ENCODE measurements at regions of chr1 and their contacts with region 1.

Region 1: DNA sequence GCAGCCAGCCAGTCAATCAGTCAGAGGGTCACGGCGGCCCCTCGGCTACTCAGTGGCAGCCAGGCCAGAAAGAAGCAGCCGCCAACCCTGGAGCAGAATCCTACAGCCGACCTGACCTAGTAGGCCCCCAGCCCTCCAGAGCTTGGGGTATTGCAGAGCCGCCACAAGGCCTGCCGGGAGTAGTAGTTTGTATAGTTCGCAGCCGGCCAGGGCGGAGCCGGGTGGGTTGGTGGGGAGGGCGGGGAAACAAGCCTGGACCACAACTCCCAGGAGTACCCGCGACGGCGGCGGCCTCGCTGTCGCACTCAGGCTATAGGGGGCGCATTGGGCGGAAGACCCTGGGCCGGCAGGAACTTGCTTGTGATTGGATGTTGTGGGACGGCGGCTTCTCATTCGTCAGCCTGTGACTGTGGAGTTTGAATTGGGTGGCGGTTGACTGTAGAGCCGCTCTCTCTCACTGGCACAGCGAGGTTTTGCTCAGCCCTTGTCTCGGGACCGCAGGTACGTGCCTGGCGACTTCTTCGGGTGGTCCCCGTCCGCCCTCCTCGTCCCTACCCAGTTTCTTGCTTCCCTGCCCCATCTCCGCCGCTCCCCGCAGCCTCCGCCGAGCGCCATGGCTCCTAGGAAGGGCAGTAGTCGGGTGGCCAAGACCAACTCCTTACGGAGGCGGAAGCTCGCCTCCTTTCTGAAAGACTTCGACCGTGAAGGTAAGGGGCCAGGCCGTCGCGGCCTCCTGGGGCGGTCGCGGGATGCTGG is at the start of gene CDCA8:
- DNase-seq: peak; percentile 98
- ATAC-seq: peak; percentile 94 to 98 (median 95)
- H3K4me3 ChIP-seq: peak within 1 kb of the TSS; percentile 67 to 98 (median 87)
- H3K27ac ChIP-seq: peak within 1 kb of the TSS; percentile 60 to 90 (median 78)
- H3K4me1 ChIP-seq: peaks cover 10 to 36% (median 29%) of the 10 kb centered on the region in 9 donors
- H3K27me3 ChIP-seq: no peaks in the 10 kb centered on the region
- CTCF ChIP-seq: peak; percentile 25 to 90 (median 70)
- total RNA-seq, gene CDCA8: 0.09 to 2.9 (median 0.42) TPM in 9 of 10 donors, not detected in the other

Region 2: GRCh38 chr1:36464605-36465393 is 1227.5 kb before region 1 on chr1:
- intact Hi-C with region 1: loop called in 1 of 10 experiments (anchors 5 kb)
- DNase-seq: peak in 1 of 2 donors; percentile 18
- ATAC-seq: peak; percentile 41 to 68 (median 60)
- H3K4me3 ChIP-seq: peak overlapping the region; percentile 81 to 99 (median 96)
- H3K27ac ChIP-seq: peak overlapping the region; percentile 9 to 95 (median 89)
- H3K4me1 ChIP-seq: peaks cover 8 to 25% (median 17%) of the 10 kb centered on the region in 9 donors
- H3K27me3 ChIP-seq: no peaks in the 10 kb centered on the region
- CTCF ChIP-seq: no peak

Region 3: GRCh38 chr1:37479255-37480124 is 212.8 kb before region 1 on chr1:
- intact Hi-C with region 1: loop called in 2 of 10 experiments (anchors 5 kb)
- DNase-seq: peak; percentile 64 to 68
- ATAC-seq: peak; percentile 12 to 75 (median 48)
- H3K4me3 ChIP-seq: peak overlapping the region in 9 of 10 donors; percentile 18 to 92 (median 36)
- H3K27ac ChIP-seq: peak overlapping the region; percentile 11 to 98 (median 82)
- H3K4me1 ChIP-seq: peaks cover 20 to 65% (median 56%) of the 10 kb centered on the region in 9 donors
- H3K27me3 ChIP-seq: no peaks in the 10 kb centered on the region
- CTCF ChIP-seq: no peak

Region 4: DNA sequence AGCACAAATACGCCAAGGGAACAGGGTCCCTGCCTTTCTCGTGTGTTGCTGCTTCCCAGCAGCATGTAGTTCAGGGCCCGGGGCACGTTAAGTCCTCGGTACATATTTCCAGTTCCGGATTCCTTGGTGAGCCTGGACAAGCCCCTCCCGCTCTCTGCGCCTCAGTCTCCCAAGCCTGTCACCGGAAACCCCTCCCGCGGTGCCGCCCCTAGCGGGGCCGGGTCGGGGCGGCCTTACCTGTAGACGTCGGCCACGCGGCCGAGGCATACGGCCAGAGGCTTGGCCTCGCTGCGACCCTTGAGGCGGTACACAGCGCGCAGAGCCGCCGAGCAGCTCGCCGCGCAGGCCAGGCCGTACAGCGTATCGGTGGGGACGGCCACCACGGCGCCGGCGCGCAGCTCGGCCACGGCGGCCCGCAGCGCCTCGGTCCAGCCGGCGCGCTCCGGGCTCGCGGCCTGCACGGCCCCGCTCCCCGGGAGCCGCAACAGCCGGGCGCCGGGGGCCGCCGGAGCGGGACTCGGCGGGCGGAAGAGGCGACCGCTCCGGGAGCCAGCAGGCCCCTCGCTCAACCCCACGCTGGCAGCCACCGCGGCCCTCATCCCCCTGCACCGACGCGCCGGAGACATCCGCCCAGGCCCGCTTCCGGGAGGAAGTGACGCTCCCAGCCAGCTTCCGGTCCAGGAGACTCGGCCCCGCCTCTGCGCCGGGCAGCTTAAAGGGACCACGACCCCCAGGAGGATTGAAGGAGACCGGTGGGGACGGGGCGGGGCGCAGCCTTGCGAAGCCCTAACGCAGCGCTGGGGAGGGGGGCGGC is 115.5 kb after region 1 on chr1 and contains the starts of genes C1orf122 and YRDC:
- intact Hi-C with region 1: loop called in 5 of 10 experiments (anchors 5 to 10 kb)
- DNase-seq: peak; percentile 95 to 96
- ATAC-seq: peak; percentile 95 to 98 (median 96)
- H3K4me3 ChIP-seq: peak within 1 kb of the TSS; percentile 79 to 98 (median 87)
- H3K27ac ChIP-seq: peak within 1 kb of the TSS; percentile 76 to 99 (median 96)
- H3K4me1 ChIP-seq: peaks cover 7 to 45% (median 21%) of the 10 kb centered on the region in 9 donors
- H3K27me3 ChIP-seq: no peaks in the 10 kb centered on the region
- CTCF ChIP-seq: no peak
- total RNA-seq, gene C1orf122: 37.8 to 53.0 (median 46.0) TPM
- total RNA-seq, gene YRDC: 3.3 to 9.1 (median 5.5) TPM

Region 5: DNA sequence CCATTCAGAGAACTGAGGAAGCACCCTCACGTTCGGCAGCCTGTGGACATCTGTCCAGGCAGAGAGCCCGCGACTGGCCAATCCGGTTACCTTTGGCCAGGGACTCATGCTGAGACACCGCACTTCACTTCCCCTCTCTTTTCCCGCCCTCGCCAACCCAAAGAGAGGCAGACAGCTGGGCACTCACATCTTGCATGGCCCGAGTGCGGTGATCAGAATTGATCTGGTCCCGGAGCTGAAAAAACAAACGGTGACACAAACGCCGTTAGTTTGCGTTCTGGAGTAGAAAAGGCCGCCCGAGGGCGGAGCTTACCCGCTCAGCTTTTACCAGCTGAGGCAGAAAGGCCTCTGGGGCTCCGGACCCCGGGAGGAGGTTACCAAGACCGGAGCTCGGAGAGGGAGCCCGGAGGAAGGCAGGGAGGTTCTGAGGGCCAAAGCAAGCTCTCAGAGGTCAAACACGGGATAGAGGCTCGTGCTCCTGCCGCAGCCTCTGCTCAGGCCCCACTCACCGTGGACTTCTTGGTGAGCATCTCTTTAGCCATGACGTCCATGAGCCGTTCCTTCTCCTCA is 297.2 kb after region 1 on chr1:
- intact Hi-C with region 1: loop called in 1 of 10 experiments (anchors 10 kb)
- DNase-seq: peak in 1 of 2 donors; percentile 23
- ATAC-seq: peak; percentile 5 to 68 (median 32)
- H3K4me3 ChIP-seq: peak overlapping the region; percentile 61 to 91 (median 86)
- H3K27ac ChIP-seq: peak overlapping the region in 9 of 10 donors; percentile 71 to 86 (median 82)
- H3K4me1 ChIP-seq: peaks cover 0 to 27% (median 19%) of the 10 kb centered on the region in 9 donors
- H3K27me3 ChIP-seq: no peaks in the 10 kb centered on the region
- CTCF ChIP-seq: no peak

Measured in heart right ventricle (tissue), 16 donors.